WTC11 (cell line): ENCODE measurements at regions of chr15 and their contacts with region 1.

Region 1: DNA sequence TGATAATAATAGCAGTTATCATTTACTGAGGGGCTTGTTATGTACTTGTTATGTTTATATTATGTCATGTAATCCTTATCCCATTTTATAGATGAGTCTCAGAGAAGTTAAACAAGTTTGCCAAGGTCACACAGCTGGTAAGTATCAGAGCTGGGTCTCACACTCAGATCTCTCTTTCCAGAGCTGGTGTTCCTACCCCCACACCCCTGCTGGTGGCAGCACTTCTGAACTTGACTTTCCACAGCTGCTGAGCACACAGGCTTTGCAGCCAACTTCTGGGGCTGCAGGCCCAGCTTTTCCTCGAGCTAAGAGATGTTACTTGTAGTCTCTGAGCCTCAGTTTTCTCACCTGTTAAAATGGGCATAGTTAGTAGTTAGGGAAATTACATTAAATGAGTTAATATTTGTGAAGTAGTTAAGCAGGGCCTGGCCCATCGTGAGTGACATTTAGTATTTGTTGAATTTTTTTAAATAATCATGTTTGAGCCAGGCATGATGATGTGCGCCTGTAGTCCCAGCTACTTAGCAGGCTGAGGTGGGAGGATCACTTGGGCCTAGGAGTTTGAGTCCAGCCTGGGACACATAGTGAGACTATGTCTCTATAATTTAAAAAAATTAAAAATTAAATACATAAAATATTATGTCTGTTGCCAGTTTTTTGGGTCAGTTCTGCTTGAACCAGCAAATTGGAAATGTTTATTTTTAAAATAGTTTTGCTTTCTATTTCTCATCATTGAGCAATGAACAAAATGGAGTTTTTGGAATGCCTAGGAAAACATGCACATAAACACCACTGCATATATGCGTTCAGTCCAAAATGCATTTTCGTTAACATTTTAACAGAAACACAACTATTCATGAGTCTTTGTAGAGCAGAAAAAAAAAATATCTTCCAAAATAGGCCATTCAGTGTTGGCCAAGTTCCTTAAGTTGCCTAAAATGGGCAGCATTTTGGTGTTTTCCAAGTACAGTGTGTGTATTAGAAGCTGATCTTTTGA is 87.3 kb downstream of the SMAD6 start:
- DNase-seq: peak; percentile 66
- ATAC-seq: peak; percentile 92
- H3K4me3 Mint-ChIP-seq: no peak overlapping the region
- H3K27ac Mint-ChIP-seq: no peak overlapping the region
- H3K4me1 Mint-ChIP-seq: peaks cover 8% of the 10 kb centered on the region; the same call in 1 of the 2 replicates
- H3K27me3 Mint-ChIP-seq: no peaks in the 10 kb centered on the region
- CTCF ChIP-seq: no peak

Region 2: GRCh38 chr15:66763186-66764066 is 25.9 kb before region 1 on chr15:
- CTCF ChIA-PET with region 1: no interaction called
- POLR2A ChIA-PET with region 1: no interaction called
- DNase-seq: no peak
- ATAC-seq: no peak
- H3K4me3 Mint-ChIP-seq: no peak overlapping the region
- H3K27ac Mint-ChIP-seq: no peak overlapping the region
- H3K4me1 Mint-ChIP-seq: peaks cover 34% of the 10 kb centered on the region
- H3K27me3 Mint-ChIP-seq: no peaks in the 10 kb centered on the region
- CTCF ChIP-seq: no peak

Region 3: DNA sequence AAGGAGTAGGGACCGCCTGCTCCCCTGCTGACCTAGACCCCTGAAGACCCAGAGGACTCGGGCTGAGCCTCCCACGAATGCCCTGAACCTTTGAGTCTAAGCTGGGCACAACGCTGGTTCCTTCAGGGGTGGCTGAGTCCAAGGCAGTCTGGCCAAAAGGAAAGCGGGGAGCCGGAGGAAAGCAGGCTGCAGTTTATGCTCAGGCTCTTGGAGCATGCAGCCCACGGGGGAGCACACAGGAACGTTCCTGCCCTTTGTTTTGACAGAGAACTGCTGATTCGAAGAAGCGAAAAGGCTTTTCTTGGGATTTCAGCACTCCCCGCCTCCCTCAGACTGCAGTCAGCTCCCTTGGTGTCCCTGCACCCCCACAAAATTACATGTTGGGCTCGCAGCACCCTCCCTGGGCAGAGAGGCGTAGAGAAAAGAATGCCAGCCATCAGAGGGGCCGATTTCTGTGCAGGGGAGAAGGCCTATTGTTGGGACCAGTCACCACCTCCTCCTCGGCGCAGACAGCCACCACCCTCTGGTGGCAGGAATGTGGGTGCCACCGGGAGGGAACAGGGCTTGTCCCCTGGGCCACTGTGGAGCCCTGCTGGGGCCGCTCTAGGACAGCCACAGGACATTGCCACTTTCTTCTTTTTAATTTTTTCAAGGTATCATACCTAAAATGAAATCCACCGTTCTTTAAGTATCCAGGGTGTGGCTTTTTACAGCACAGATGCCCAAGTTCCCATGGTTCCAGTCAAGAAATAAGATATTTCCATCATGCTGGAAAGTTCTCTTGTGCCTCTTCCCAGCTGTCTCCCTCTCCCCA is 15.1 kb before region 1 on chr15:
- CTCF ChIA-PET with region 1: interaction called, 18 read pairs
- POLR2A ChIA-PET with region 1: no interaction called
- DNase-seq: peak; percentile 92
- ATAC-seq: peak; percentile 86
- H3K4me3 Mint-ChIP-seq: no peak overlapping the region
- H3K27ac Mint-ChIP-seq: peak overlapping the region; percentile 83
- H3K4me1 Mint-ChIP-seq: peaks cover 47% of the 10 kb centered on the region
- H3K27me3 Mint-ChIP-seq: no peaks in the 10 kb centered on the region
- CTCF ChIP-seq: peak; percentile 99

Region 4: GRCh38 chr15:66832664-66833063 is 43.3 kb after region 1 on chr15:
- CTCF ChIA-PET with region 1: interaction called, 10 read pairs
- POLR2A ChIA-PET with region 1: no interaction called
- DNase-seq: no peak
- ATAC-seq: no peak
- H3K4me3 Mint-ChIP-seq: no peak overlapping the region
- H3K27ac Mint-ChIP-seq: no peak overlapping the region
- H3K4me1 Mint-ChIP-seq: peaks cover 52% of the 10 kb centered on the region
- H3K27me3 Mint-ChIP-seq: peaks cover 16% of the 10 kb centered on the region
- CTCF ChIP-seq: no peak